BJ (cell line): ENCODE measurements at regions of chr1 and their contacts with region 1.

Region 1: DNA sequence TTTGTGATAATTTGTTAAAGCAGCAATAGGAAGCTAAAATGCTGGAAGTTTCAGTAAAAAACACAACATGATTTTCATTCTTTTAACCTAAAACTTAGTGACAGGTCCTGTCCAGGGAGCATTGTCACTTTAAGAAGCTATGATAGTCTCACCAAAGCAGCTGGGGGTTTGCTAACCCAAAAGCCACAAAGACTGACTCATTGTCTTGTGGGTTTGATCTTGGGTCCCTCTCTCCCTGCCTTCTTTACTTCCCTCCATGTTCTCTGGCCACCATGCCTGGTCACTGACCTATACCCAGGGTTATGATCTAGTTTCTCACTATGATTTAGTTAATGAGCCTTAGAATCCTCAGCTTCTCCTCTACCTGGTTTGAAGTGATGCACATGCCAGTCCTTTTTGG is 213.5 kb upstream of the PTGFR start:
- DNase-seq: no peak
- H3K4me3 ChIP-seq: no peak overlapping the region
- H3K27me3 ChIP-seq: no peaks in the 10 kb centered on the region
- CTCF ChIP-seq: no peak

Region 2: DNA sequence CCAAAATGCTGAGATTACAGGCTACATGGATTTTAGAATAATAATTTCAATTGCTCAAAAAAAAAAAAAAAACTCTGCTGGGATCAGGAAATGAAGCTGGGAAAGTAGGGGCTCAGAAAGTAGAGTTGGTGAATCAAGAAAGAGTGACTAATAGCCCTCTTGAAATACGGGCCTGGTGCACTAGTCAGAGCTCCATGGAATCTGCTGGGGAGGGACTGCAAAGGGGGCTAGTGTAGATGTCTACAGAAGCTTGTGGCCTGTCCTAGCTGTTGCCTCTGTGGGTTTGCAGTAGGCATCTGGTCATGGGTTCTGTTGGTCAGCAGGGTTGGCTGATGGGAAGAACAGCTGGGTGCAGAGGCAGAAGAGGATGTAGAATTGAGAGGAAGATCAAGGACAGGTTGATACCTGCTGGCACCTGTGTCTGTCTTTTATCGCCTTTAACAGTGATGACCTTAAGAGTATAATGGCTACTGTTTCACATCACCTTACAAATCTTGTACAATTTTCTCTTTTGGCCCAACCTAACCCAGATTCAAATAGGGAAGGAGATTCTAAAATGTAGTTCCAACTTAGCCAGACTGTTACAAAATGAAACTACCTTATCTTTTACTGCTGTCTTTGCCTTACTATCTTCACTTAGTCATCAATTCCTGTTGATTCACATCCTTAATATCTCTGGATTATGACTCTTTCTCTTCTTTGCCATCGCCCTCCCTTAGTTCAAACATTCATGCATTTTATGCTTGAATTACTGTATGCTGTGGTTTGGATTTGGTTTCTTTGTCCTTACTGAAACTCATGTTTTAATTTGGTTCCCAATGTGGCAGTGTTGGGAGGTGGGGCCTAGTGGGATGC is 105.3 kb before region 1 on chr1:
- CTCF ChIA-PET with region 1: no interaction called
- POLR2A ChIA-PET with region 1: interaction called, 15 read pairs
- DNase-seq: no peak
- H3K4me3 ChIP-seq: no peak overlapping the region
- H3K27me3 ChIP-seq: no peaks in the 10 kb centered on the region
- CTCF ChIP-seq: no peak

Region 3: DNA sequence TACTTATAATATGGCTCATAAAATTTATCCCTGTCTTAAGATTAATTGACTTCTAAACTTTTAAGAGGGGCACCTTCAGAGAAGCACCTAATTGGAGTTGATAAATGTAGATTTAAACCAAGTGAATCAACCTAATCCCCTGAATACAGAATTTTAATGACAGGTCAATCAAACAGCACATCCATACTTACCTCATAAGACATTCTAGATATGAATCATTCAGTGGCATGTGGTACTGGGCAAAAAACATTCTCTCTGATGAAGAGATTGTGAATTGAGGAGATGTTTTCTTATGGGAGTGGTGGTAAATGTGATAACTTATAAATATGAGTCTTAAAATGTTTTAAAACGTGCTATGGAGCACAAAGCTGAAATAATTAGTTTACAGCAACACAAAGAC is 46.1 kb after region 1 on chr1:
- CTCF ChIA-PET with region 1: no interaction called
- POLR2A ChIA-PET with region 1: no interaction called
- DNase-seq: peak; percentile 18
- H3K4me3 ChIP-seq: no peak overlapping the region
- H3K27me3 ChIP-seq: no peaks in the 10 kb centered on the region
- CTCF ChIP-seq: no peak

Region 4: DNA sequence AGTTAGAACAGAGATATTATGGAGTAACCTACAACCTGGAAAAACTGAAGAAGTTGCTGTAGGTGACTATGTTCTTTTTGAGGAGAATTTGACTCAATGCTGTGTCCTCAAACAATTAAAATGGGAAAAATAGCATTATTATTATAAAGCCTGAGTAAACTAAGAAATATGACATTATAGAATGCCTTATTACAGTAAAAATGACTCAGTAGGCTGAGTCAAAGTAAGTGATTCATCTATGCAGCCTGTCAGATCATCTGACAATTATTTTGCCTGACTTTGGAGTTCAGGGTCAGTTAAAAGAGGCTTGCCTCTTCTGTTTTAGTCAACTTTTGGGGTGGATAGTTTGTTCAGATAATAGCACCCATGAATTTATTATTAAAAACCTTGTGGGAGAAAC is 62.8 kb after region 1 on chr1:
- CTCF ChIA-PET with region 1: interaction called, 3 read pairs
- POLR2A ChIA-PET with region 1: interaction called, 10 read pairs
- DNase-seq: peak; percentile 51
- H3K4me3 ChIP-seq: no peak overlapping the region
- H3K27me3 ChIP-seq: no peaks in the 10 kb centered on the region
- CTCF ChIP-seq: no peak